ENCODE measurements at regions of chr1 and their contacts with region 1.

Region 1: DNA sequence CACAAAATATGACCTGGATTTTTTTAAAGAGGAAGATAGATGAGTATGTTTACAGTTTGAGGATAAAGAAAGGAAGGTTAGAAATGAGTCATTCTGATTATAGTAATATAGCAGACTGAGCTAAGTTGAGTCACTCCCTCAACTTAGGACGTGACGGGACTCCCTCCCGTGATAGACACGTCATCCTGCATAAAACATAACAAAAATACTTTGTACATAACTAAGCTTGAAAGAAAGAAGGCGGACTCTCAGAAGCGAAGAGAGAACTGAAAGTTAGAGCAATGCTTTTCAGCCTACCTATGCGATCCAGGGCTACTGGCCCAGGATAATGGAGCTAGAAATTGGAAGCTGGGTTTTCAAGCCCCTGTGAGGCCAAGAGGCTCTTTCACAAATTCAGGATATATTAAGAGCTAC is 53.0 kb upstream of the DESI2 start:
- DNase-seq: peak; percentile 79
- H3K4me3 Mint-ChIP-seq: peak overlapping the region; percentile 64
- H3K27ac Mint-ChIP-seq: peak overlapping the region; percentile 87
- H3K4me1 Mint-ChIP-seq: peaks cover 21% of the 10 kb centered on the region
- H3K27me3 Mint-ChIP-seq: peaks cover 2% of the 10 kb centered on the region

Region 2: DNA sequence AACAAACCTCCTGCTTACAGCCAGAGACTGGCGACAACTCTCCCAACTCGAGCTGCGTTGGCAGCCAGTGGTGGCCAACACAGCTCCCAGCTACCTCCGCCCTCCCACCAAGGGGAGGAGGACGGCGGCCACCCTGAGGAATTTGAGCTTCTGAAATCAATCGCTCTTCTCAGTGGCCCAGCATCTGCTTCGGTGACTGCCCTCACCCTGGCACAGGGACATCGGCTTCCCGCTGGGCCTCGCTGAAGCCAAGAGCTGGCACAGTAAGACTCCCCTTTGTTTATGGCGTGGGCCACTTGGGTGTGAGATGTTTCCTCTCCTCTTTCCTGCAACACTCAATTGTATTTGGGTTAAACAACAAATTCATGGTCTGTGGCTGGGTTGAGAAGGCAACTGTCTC is 412.6 kb before region 1 on chr1:
- CTCF ChIA-PET with region 1: no interaction called
- intact Hi-C with region 1: no loop called
- DNase-seq: no peak
- H3K4me3 Mint-ChIP-seq: no peak overlapping the region
- H3K27ac Mint-ChIP-seq: no peak overlapping the region
- H3K4me1 Mint-ChIP-seq: no peaks in the 10 kb centered on the region
- H3K27me3 Mint-ChIP-seq: no peaks in the 10 kb centered on the region

Region 3: GRCh38 chr1:244353551-244354091 is 246.3 kb before region 1 on chr1:
- CTCF ChIA-PET with region 1: no interaction called
- intact Hi-C with region 1: loop called (anchors 5 kb)
- DNase-seq: peak; percentile 77
- H3K4me3 Mint-ChIP-seq: no peak overlapping the region
- H3K27ac Mint-ChIP-seq: peak overlapping the region; percentile 50
- H3K4me1 Mint-ChIP-seq: peaks cover 26% of the 10 kb centered on the region
- H3K27me3 Mint-ChIP-seq: no peaks in the 10 kb centered on the region

Region 4: DNA sequence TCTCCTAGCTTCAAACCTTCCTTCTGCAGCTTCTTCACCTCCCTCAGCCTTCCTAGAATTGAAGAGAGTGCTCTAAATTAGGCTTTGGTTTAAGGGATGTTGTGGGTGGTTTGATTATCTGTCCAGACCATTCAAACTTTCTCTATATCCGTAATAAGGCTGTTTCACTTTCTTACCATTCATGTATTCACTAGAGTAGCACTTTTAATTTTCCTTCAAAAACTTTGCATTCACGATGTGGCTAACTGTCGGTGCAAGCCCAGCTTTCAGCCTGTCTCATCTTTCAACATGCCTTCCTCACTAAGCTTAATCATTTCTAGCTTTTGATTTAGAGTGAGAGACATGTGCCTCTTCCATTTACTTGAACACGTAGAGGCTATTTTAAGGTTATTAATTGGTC is 26.8 kb after region 1 on chr1:
- CTCF ChIA-PET with region 1: interaction called, 11 read pairs
- intact Hi-C with region 1: no loop called
- DNase-seq: no peak
- H3K4me3 Mint-ChIP-seq: no peak overlapping the region
- H3K27ac Mint-ChIP-seq: no peak overlapping the region
- H3K4me1 Mint-ChIP-seq: no peaks in the 10 kb centered on the region
- H3K27me3 Mint-ChIP-seq: no peaks in the 10 kb centered on the region

Region 5: DNA sequence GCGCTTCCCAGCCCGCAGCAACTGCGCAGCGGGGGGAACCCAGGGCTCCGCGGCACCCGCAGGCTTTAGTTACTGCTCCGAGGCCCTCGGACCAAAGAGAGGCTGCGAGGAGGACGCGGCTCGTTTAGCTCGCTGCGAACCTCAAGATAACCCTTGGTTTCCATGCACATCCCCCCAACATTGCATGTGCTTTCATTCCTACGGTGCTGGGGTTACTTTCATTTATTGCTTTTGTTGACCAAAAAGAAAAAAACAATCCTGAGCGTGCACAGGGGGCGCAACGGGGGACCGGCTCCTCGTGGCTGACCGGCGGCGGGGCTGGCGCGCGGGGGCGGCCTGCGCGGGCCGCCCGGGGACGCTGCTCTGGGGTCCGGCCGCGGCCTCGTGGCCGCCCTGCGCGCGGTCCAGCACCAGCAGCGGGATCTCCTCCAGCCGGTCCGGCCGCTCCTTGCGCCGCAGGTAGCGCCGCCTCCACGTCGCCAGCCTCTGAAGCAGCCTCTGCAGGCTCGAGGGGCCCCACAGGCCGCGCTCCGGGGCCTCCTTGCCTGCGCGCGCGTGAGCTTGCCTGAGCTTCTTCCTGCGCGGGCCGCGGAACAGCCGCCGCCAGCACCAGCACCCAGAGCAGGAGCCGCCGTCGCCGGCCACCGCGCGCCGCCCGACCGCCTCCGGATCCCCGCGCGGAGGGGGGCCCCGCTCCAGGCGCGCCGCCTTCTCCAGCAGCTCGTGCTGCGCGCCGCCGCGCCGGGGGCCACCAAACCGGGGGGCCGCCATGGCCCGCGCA is 130.4 kb after region 1 on chr1:
- CTCF ChIA-PET with region 1: interaction called, 11 read pairs
- intact Hi-C with region 1: loop called (anchors 1 kb)
- DNase-seq: peak; percentile 36
- H3K4me3 Mint-ChIP-seq: peak overlapping the region; percentile 78
- H3K27ac Mint-ChIP-seq: no peak overlapping the region
- H3K4me1 Mint-ChIP-seq: peaks cover 9% of the 10 kb centered on the region
- H3K27me3 Mint-ChIP-seq: peaks cover 22% of the 10 kb centered on the region

Region 6: GRCh38 chr1:244835276-244836134 is 235.6 kb after region 1 on chr1 and contains the start of gene COX20:
- CTCF ChIA-PET with region 1: no interaction called
- intact Hi-C with region 1: loop called (anchors 1 kb)
- DNase-seq: peak; percentile 85
- H3K4me3 Mint-ChIP-seq: peak within 1 kb of the TSS; percentile 94
- H3K27ac Mint-ChIP-seq: peak within 1 kb of the TSS; percentile 99
- H3K4me1 Mint-ChIP-seq: peaks cover 38% of the 10 kb centered on the region
- H3K27me3 Mint-ChIP-seq: no peaks in the 10 kb centered on the region
- total RNA-seq, gene COX20: 21.4 to 24.2 TPM

Region 7: DNA sequence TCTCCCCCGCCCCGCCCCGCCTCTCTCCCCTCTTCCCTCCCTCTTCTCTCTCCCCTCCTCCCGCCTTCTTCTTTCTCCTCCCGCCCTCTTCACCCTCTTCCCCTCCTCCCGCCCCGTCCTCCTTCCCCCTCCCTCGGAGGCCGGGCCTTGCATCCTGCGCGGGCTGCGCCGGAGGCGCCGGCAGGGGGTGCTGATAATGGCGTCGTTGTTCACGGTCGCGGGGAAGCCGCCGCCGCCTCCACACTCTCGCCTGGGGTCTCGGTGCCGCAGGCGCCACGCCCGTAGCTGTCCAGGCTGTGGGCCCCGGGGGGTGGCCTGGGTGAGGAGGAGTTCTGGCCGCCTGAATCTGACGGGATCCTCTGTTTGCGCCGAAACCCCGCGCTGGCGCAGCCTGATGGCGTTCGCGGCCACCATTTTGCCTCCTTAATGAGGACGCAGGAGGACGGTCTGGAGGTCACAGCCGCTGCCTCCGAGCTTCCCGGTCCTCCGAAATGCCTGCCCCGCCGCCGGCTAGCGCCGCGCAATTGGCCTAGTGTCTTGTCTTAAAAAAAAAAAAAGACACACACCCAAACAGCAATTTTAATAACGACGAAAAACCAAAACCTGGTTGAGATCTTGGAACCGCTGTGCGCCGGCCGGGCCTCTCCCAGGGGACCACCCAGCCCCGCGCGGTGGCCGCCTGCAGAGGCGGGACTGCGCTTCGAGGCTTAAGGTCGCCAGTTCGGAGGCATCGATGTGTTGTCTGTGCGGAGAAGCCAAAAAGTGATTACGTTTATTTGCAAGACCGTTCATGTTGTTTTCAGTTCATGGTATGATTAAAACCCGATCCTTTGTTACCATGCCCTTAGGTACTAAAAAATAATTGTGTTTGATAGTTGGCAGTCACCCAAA is 371.0 kb after region 1 on chr1:
- CTCF ChIA-PET with region 1: no interaction called
- intact Hi-C with region 1: loop called (anchors 1 kb)
- DNase-seq: peak; percentile 93
- H3K4me3 Mint-ChIP-seq: peak overlapping the region; percentile 93
- H3K27ac Mint-ChIP-seq: peak overlapping the region; percentile 98
- H3K4me1 Mint-ChIP-seq: peaks cover 11% of the 10 kb centered on the region
- H3K27me3 Mint-ChIP-seq: no peaks in the 10 kb centered on the region

Measured in activated naive CD4-positive, alpha-beta T cell treated with anti-CD3 and anti-CD28 coated beads for 36 hours (primary cell).